ENCODE measurements at regions of chr18 and their contacts with region 1.

Region 1: DNA sequence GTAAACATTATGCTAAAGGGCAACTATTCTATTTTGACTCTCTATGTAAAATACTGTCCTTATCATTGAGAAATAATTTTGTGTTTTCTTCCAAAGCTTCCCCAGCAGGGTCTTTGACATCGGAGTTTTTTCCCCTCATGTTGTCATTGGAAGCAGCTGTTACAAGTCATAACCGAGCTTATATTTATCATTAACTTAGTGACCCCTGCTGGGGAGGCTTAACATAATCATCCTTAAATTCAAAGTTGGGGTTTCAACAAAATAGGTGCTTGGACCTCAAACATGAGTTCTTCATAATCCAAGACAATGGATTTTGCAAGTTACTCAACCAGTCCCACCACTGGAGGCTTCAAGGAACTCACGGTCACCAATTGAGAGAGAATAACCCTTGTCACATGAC is 330.9 kb downstream of the DCC start:
- DNase-seq: peak; percentile 7
- H3K4me3 Mint-ChIP-seq: no peak overlapping the region
- H3K27ac Mint-ChIP-seq: no peak overlapping the region
- H3K4me1 Mint-ChIP-seq: no peaks in the 10 kb centered on the region
- H3K27me3 Mint-ChIP-seq: no peaks in the 10 kb centered on the region
- CTCF ChIP-seq: no peak

Region 2: GRCh38 chr18:52339891-52340371 is 331.0 kb before region 1 on chr18 and contains the start of gene DCC:
- CTCF ChIA-PET with region 1: interaction called, 10 read pairs
- POLR2A ChIA-PET with region 1: no interaction called
- intact Hi-C with region 1: no loop called
- DNase-seq: peak; percentile 6
- H3K4me3 Mint-ChIP-seq: peak within 1 kb of the TSS; percentile 62
- H3K27ac Mint-ChIP-seq: no peak within 1 kb of the TSS
- H3K4me1 Mint-ChIP-seq: no peaks in the 10 kb centered on the region
- H3K27me3 Mint-ChIP-seq: no peaks in the 10 kb centered on the region
- CTCF ChIP-seq: no peak
- total RNA-seq, gene DCC: not detected in 2 replicates

Region 3: GRCh38 chr18:52743419-52743818 is 72.5 kb after region 1 on chr18:
- CTCF ChIA-PET with region 1: no interaction called
- POLR2A ChIA-PET with region 1: no interaction called
- intact Hi-C with region 1: no loop called
- DNase-seq: no peak
- H3K4me3 Mint-ChIP-seq: no peak overlapping the region
- H3K27ac Mint-ChIP-seq: no peak overlapping the region
- H3K4me1 Mint-ChIP-seq: no peaks in the 10 kb centered on the region
- H3K27me3 Mint-ChIP-seq: no peaks in the 10 kb centered on the region
- CTCF ChIP-seq: no peak

Measured in MCF 10A (cell line).